ENCODE measurements at regions of chr19 and their contacts with region 1.

Region 1: GRCh38 chr19:4182084-4182810 is at the starts of genes ANKRD24 and SIRT6:
- DNase-seq: peak; percentile 98
- ATAC-seq: peak; percentile 84
- H3K4me3 Mint-ChIP-seq: peak within 1 kb of the TSS; percentile 92
- H3K27ac Mint-ChIP-seq: peak within 1 kb of the TSS; percentile 93
- H3K4me1 Mint-ChIP-seq: peaks cover 30% of the 10 kb centered on the region
- H3K27me3 Mint-ChIP-seq: no peaks in the 10 kb centered on the region
- total RNA-seq, gene ANKRD24: 1.1 to 1.3 TPM
- total RNA-seq, gene SIRT6: 26.2 to 29.4 TPM

Region 2: DNA sequence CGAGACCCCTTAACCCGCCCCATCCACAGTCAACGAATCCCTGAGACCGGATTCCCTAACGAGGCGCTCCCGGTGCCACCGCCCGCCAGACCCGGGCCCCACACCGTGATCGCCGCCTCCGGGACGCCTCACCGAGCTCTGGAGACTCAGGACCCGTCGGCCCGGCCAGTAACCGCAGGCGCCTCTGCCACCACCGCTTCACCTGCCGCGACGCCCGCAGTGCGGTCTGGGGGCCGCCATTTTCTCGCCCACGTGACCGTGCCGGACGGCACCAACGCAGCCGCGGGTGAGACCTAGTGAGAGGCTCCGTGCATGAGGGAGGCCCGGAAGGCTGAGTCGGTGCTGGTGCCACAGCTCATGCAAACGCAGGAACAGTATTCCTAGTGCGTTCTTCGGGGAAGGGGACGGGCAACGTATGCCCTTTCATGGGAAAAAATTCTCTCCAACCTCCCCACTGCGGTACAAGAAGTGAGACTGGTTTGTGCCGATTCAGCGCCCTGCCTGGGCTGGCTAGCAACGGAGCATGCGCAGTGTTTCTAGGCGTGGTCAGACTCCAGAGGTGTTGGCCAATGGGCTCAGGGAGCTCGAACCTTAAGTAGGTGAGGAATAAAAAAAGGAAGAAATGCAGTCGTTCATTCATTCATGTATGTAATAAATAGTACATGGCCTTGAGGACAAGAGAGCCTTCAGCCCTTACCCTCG is 681.7 kb before region 1 on chr19 and contains the start of gene DOHH:
- CTCF ChIA-PET with region 1: no interaction called
- POLR2A ChIA-PET with region 1: no interaction called
- intact Hi-C with region 1: loop called in 1 of 2 experiments (anchors 5 kb)
- DNase-seq: peak; percentile 98
- ATAC-seq: peak; percentile 95
- H3K4me3 Mint-ChIP-seq: peak within 1 kb of the TSS; percentile 91
- H3K27ac Mint-ChIP-seq: peak within 1 kb of the TSS; percentile 97
- H3K4me1 Mint-ChIP-seq: peaks cover 26% of the 10 kb centered on the region
- H3K27me3 Mint-ChIP-seq: no peaks in the 10 kb centered on the region
- total RNA-seq, gene DOHH: 9.6 to 15.4 TPM

Region 3: DNA sequence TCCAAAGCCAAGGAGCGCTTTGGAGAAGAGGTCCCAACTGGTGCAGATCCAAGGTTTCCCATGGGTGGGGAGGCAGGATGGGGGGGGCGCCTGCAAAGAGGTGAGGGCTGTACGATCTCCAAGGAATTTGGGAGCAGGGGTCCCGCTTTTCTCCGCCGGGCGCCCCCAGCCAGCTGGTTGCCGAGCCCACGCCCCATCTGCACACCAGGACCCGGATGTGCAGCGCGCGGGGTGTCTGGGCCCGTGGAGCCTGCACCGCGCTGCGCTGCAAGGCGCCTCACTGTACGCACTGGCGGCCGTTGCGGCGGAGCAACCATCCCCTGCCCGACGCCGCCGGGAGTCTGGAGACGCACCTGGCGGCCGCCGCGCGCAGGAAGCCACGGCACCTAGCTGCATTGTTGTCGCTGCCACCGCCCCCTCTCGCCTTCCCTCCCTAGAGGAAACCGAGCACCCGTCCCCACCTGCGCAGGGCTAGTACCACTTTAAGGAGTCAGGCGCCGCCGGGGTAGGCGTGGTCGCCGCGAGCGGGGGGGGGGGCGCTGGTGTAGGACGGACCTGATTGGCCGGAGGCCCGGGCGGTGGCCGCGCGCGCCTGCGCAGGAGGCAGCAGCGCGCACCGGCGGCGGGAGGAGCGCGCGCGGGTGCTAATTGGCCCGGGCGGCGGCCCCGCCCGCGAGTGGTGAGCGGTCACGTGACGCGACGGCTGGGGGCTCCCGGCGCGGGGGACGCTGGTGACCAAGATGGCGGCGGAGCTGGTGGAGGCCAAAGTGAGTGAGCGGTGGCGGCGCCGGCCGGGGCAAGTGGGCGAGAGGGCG is 175.0 kb before region 1 on chr19 and contains the start of gene PIAS4:
- CTCF ChIA-PET with region 1: interaction called, 3 read pairs
- POLR2A ChIA-PET with region 1: interaction called, 3 read pairs
- intact Hi-C with region 1: loop called in 1 of 2 experiments (anchors 1 kb)
- DNase-seq: peak; percentile 97
- ATAC-seq: peak; percentile 92
- H3K4me3 Mint-ChIP-seq: peak within 1 kb of the TSS; percentile 75
- H3K27ac Mint-ChIP-seq: peak within 1 kb of the TSS; percentile 71
- H3K4me1 Mint-ChIP-seq: peaks cover 27% of the 10 kb centered on the region
- H3K27me3 Mint-ChIP-seq: no peaks in the 10 kb centered on the region
- total RNA-seq, gene PIAS4: 23.0 to 37.3 TPM

Region 4: GRCh38 chr19:4123615-4124568 is 58.4 kb before region 1 on chr19 and contains the start of gene MAP2K2:
- CTCF ChIA-PET with region 1: no interaction called
- POLR2A ChIA-PET with region 1: no interaction called
- intact Hi-C with region 1: loop called in 1 of 2 experiments (anchors 1 kb)
- DNase-seq: peak; percentile 98
- ATAC-seq: peak; percentile 96
- H3K4me3 Mint-ChIP-seq: peak within 1 kb of the TSS; percentile 97
- H3K27ac Mint-ChIP-seq: peak within 1 kb of the TSS; percentile 92
- H3K4me1 Mint-ChIP-seq: peaks cover 18% of the 10 kb centered on the region
- H3K27me3 Mint-ChIP-seq: no peaks in the 10 kb centered on the region
- total RNA-seq, gene MAP2K2: 108 to 133 TPM

Region 5: GRCh38 chr19:4297901-4298809 is 115.9 kb after region 1 on chr19:
- CTCF ChIA-PET with region 1: no interaction called
- POLR2A ChIA-PET with region 1: interaction called, 11 read pairs
- intact Hi-C with region 1: no loop called
- DNase-seq: peak; percentile 76
- ATAC-seq: peak; percentile 83
- H3K4me3 Mint-ChIP-seq: no peak overlapping the region
- H3K27ac Mint-ChIP-seq: peak overlapping the region; percentile 48
- H3K4me1 Mint-ChIP-seq: peaks cover 34% of the 10 kb centered on the region
- H3K27me3 Mint-ChIP-seq: no peaks in the 10 kb centered on the region

Measured in activated CD4-positive, alpha-beta T cell treated with anti-CD3 and anti-CD28 coated beads for 36 hours (primary cell).